ENCODE measurements at regions of chr16 and their contacts with region 1.

Region 1: GRCh38 chr16:351804-352520 is 561 bp downstream of the AXIN1 start:
- DNase-seq: peak in 2 of 3 donors; percentile 27 to 31
- H3K4me3 ChIP-seq: peak overlapping the region; percentile 34 to 90 (median 67)
- H3K27ac ChIP-seq: peak overlapping the region in 1 of 2 experiments; percentile 78
- H3K4me1 ChIP-seq: peaks cover 0 to 46% (median 29%) of the 10 kb centered on the region in 4 experiments
- H3K27me3 ChIP-seq: no peaks in the 10 kb centered on the region

Region 2: GRCh38 chr16:339680-340079 is 12.3 kb before region 1 on chr16:
- CTCF ChIA-PET with region 1: interaction called, 30 read pairs
- POLR2A ChIA-PET with region 1: interaction called, 6 read pairs
- DNase-seq: peak in 2 of 3 donors; percentile 56 to 64
- H3K4me3 ChIP-seq: peak overlapping the region in 3 of 7 experiments; percentile 8 to 34 (median 28)
- H3K27ac ChIP-seq: peak overlapping the region in 1 of 2 experiments; percentile 14
- H3K4me1 ChIP-seq: peaks cover 0 to 47% (median 32%) of the 10 kb centered on the region in 4 experiments
- H3K27me3 ChIP-seq: no peaks in the 10 kb centered on the region

Measured in common myeloid progenitor, CD34-positive (primary cell).